ENCODE measurements at regions of chr11 and their contacts with region 1.

Region 1: DNA sequence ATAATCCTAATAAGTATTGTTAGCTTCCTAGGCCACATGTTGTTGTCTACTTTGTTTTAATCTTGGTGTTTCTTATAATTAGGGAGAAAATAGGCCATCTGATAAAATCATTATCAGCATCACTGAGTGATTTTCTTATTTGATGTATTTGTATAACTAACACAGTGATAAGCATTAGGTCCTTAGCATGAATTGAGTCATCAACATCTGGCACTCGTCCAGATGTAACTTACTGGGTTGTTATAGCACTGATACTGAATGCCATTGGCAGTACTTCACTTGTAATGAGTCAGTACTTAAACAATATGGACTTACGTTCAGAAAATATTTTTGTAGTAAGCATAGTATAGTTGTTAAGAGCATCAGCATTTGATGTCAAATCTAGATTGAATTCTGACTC is 16.2 kb downstream of the API5 start:
- DNase-seq: no peak
- ATAC-seq: no peak
- H3K4me3 ChIP-seq: no peak overlapping the region
- H3K27ac ChIP-seq: no peak overlapping the region
- H3K4me1 ChIP-seq: no peaks in the 10 kb centered on the region
- H3K27me3 ChIP-seq: no peaks in the 10 kb centered on the region
- CTCF ChIP-seq: no peak
- POLR2A ChIP-seq: no peak

Region 2: DNA sequence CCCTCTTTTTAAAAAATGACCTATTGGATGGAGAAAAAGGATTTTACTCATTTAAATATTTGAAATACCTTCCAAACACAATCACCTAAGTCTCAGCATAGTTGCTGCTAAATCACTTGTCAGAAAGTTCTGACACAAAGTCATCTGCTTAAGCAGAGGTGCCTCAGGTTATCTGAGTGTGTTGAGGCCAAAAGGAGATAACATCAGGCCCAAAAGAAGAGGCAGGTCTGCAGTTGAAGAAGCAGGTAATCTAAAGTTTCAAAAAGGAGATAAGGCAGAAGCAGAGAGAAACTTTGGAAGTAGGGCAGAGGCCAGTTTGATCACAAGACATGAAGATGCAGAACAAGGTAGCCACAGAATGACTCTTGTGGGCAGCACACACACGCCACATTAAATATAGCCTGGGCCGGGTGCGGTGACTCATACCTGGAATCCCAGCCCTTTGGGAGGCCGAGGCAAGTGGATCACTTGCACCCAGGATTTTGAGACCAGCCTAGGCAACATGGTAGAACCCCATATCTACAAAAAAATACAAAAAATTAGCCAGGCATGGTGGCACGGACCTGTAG is 191.9 kb before region 1 on chr11:
- intact Hi-C with region 1: no loop called
- DNase-seq: no peak
- ATAC-seq: no peak
- H3K4me3 ChIP-seq: no peak overlapping the region
- H3K27ac ChIP-seq: no peak overlapping the region
- H3K4me1 ChIP-seq: no peaks in the 10 kb centered on the region
- H3K27me3 ChIP-seq: peaks cover 0 to 4% (median 0%) of the 10 kb centered on the region in 9 donors
- CTCF ChIP-seq: no peak
- POLR2A ChIP-seq: no peak

Region 3: GRCh38 chr11:43376594-43376993 is 48.6 kb after region 1 on chr11:
- intact Hi-C with region 1: no loop called
- DNase-seq: no peak
- ATAC-seq: no peak
- H3K4me3 ChIP-seq: no peak overlapping the region
- H3K27ac ChIP-seq: no peak overlapping the region
- H3K4me1 ChIP-seq: peaks cover 0 to 21% (median 0%) of the 10 kb centered on the region in 12 donors
- H3K27me3 ChIP-seq: no peaks in the 10 kb centered on the region
- CTCF ChIP-seq: no peak
- POLR2A ChIP-seq: no peak

Region 4: DNA sequence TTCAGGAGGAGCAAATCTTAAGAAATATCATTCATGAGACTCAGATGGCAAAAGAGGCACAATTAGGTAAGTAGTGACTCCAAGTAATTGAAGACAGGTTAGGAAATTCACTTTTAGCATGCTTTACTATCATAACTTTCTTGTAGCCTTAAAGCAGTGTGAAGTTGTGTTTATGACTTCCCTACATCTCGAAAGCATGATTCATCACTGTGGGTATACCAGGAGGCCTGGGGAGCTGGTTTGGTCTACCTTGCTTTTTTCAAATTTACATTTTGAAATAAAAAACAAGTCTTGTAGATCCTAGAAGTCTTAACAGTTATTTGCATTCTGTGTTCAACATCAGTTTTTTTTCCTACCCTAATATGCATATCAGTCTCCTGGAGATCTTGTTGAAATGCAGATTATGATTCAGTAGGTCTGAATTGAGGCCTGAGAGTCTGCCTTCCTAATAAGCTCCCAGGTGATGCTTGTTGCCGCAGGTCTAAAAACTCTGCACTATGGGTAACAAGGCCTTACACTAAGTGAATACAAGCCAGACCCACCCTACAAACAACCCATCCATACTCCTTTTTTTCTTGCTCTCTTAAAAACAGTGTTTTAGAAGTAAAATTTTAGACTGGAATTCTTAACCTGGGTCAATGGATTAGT is 72.1 kb after region 1 on chr11:
- intact Hi-C with region 1: loop called in 2 of 10 experiments (anchors 5 to 10 kb)
- DNase-seq: no peak
- ATAC-seq: no peak
- H3K4me3 ChIP-seq: no peak overlapping the region
- H3K27ac ChIP-seq: no peak overlapping the region
- H3K4me1 ChIP-seq: no peaks in the 10 kb centered on the region
- H3K27me3 ChIP-seq: no peaks in the 10 kb centered on the region
- CTCF ChIP-seq: no peak
- POLR2A ChIP-seq: no peak

Region 5: DNA sequence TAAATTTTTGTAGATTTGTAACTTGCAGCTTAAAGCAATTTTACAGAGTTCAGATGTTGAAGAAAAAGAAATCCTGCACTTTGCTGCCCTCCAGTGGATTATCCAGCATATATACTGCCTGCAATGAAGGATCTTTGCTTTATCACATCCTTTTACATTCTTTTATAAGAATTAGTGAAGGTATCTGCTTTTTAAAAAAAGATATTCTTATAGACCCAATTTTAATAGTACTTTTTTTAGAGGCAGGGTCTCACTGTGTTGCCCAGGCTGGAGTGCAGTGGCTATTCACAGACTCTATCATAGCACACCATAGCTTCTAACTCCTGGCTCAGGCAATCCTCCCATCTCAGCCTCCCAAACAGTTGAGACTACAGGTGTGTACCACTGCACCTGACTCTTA is 91.5 kb after region 1 on chr11:
- intact Hi-C with region 1: no loop called
- DNase-seq: no peak
- ATAC-seq: peak in 1 of 4 donors; percentile 43
- H3K4me3 ChIP-seq: no peak overlapping the region
- H3K27ac ChIP-seq: no peak overlapping the region
- H3K4me1 ChIP-seq: no peaks in the 10 kb centered on the region
- H3K27me3 ChIP-seq: no peaks in the 10 kb centered on the region
- CTCF ChIP-seq: peak; percentile 29 to 71 (median 58)
- POLR2A ChIP-seq: no peak